ENCODE measurements at regions of chr11 and their contacts with region 1.

Region 1: GRCh38 chr11:45102810-45103621 is 43.4 kb upstream of the PRDM11 start:
- DNase-seq: peak; percentile 85
- H3K4me3 Mint-ChIP-seq: peak overlapping the region; percentile 41
- H3K27ac Mint-ChIP-seq: peak overlapping the region; percentile 18
- H3K4me1 Mint-ChIP-seq: peaks cover 12% of the 10 kb centered on the region
- H3K27me3 Mint-ChIP-seq: peaks cover 12% of the 10 kb centered on the region

Region 2: DNA sequence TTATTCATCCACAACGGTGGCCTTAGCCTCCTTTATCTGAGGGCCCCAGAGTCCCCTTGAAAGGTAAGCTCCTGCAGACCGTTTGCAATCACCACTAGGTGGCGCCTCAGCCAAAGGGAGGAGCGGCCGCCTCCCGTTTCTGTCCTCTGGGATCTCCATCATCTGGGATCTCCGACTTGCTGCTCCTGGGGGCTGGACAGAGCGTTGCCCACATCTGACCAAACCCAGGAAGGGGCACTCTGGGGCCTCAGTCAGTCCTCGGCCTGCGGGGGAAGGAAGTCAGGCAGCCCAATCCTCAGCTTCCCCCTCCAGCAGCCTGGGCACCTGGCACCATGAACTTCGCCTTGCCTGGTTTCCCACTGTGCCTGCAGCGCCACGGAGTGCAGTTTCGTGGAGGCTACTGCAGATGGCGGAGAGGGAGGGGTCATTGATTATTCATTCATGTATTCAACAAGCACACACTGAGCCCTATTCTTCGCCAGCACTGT is 175.8 kb before region 1 on chr11:
- CTCF ChIA-PET with region 1: interaction called, 741 read pairs
- intact Hi-C with region 1: loop called (anchors 1 kb)
- DNase-seq: peak; percentile 69
- H3K4me3 Mint-ChIP-seq: no peak overlapping the region
- H3K27ac Mint-ChIP-seq: no peak overlapping the region
- H3K4me1 Mint-ChIP-seq: no peaks in the 10 kb centered on the region
- H3K27me3 Mint-ChIP-seq: no peaks in the 10 kb centered on the region

Region 3: GRCh38 chr11:44950625-44951476 is 152.2 kb before region 1 on chr11 and contains the start of gene TP53I11:
- CTCF ChIA-PET with region 1: interaction called, 26 read pairs
- intact Hi-C with region 1: loop called (anchors 1 kb)
- DNase-seq: peak; percentile 71
- H3K4me3 Mint-ChIP-seq: peak within 1 kb of the TSS; percentile 73
- H3K27ac Mint-ChIP-seq: no peak within 1 kb of the TSS
- H3K4me1 Mint-ChIP-seq: peaks cover 8% of the 10 kb centered on the region
- H3K27me3 Mint-ChIP-seq: peaks cover 2% of the 10 kb centered on the region
- total RNA-seq, gene TP53I11: 10.3 to 14.0 TPM

Region 4: DNA sequence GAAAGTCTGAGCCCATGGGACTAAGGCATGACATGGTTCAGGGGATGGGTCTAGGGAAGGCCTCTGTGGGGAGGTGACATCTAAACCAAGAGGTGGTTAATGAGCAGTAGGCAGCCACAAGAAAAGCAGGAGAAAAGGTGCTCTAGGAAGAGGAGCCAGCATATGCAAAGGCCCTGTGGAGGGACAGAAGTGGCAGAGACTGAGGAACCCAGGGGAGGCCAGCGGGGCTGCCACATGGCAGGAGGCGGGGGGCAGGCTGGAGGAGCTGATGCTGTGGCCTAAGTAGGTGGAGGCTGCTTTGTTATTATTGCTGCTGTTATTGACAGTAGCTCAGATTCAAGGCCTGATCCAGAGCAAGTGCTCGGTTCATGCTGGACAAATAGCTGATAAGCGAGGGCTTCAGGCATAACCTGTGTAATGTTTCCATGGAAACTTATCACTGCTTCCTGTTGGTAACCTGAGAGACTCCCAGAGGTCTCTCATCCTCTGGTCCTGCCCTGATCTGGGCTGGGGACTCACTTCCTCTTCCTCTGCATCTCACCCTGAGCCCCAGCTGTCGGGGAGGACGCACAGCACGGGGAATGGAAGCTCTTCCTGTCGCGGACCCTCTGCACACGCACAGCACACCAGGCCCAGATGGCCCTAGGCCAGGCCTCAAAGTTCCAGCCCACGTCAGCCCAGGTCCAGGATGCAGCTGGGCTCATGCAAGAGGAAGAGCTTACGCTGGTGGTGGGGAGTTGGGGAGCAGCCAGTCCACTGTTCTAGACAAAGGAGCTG is 77.1 kb before region 1 on chr11:
- CTCF ChIA-PET with region 1: interaction called, 14 read pairs
- intact Hi-C with region 1: no loop called
- DNase-seq: peak; percentile 37
- H3K4me3 Mint-ChIP-seq: no peak overlapping the region
- H3K27ac Mint-ChIP-seq: peak overlapping the region; percentile 44
- H3K4me1 Mint-ChIP-seq: peaks cover 13% of the 10 kb centered on the region
- H3K27me3 Mint-ChIP-seq: no peaks in the 10 kb centered on the region

Region 5: GRCh38 chr11:45089676-45090499 is 13.1 kb before region 1 on chr11:
- CTCF ChIA-PET with region 1: interaction called, 7 read pairs
- intact Hi-C with region 1: loop called (anchors 2 kb)
- DNase-seq: peak; percentile 44
- H3K4me3 Mint-ChIP-seq: no peak overlapping the region
- H3K27ac Mint-ChIP-seq: no peak overlapping the region
- H3K4me1 Mint-ChIP-seq: peaks cover 7% of the 10 kb centered on the region
- H3K27me3 Mint-ChIP-seq: no peaks in the 10 kb centered on the region

Region 6: DNA sequence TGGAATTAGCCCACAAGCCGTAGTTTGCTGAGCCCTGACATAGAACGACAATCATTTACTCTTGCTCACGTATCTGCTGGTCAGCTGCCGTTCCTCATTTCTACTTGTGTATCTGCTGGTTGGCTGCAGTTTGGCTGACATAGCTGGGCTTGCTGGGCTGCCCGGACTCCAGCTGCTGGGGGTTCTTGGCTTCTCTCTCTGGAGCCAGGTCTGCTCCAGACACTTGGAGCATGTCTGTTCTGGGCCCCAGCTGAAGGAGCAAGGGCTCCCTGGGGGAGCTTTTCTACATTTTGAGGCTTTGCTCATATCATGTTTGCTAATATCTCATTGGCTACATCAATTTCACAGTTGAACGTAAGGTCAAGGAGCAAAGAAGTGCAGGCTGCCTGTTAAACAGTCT is 90.7 kb after region 1 on chr11:
- CTCF ChIA-PET with region 1: no interaction called
- intact Hi-C with region 1: no loop called
- DNase-seq: no peak
- H3K4me3 Mint-ChIP-seq: no peak overlapping the region
- H3K27ac Mint-ChIP-seq: no peak overlapping the region
- H3K4me1 Mint-ChIP-seq: no peaks in the 10 kb centered on the region
- H3K27me3 Mint-ChIP-seq: no peaks in the 10 kb centered on the region